Heart left ventricle (tissue), 16 donors: ENCODE measurements at regions of chr1 and their contacts with region 1.

Region 1: GRCh38 chr1:156226116-156226538 is 13.3 kb downstream of the PMF1 start:
- DNase-seq: peak in 1 of 5 donors; percentile 1
- ATAC-seq: no peak
- H3K4me3 ChIP-seq: no peak overlapping the region
- H3K27ac ChIP-seq: no peak overlapping the region
- H3K4me1 ChIP-seq: peaks cover 0 to 16% (median 0%) of the 10 kb centered on the region in 12 donors
- H3K27me3 ChIP-seq: no peaks in the 10 kb centered on the region
- CTCF ChIP-seq: no peak
- POLR2A ChIP-seq: no peak

Region 2: DNA sequence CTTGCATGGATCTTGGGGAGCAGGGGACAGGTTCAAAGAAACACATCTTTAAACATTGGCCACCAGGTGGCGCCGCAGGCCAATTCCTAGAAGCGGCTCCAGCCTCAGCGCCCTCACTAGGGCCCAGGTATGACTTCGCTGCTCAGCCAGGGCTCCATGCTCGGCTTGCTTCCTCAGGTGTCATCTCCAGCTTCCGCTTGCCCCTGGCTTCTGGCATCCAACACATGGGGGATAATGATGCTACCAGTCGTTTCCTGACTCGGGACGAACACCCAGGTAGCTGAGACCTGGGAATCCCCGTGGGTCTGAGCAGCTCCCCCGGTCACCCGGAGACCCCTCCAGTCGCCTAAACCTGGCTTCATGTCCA is 135.3 kb before region 1 on chr1:
- intact Hi-C with region 1: loop called (anchors 1 to 5 kb)
- DNase-seq: peak; percentile 78 to 92 (median 84)
- ATAC-seq: peak; percentile 65 to 84 (median 80)
- H3K4me3 ChIP-seq: no peak overlapping the region
- H3K27ac ChIP-seq: peak overlapping the region in 2 of 12 donors; percentile 32 to 75
- H3K4me1 ChIP-seq: peaks cover 0 to 29% (median 9%) of the 10 kb centered on the region in 12 donors
- H3K27me3 ChIP-seq: no peaks in the 10 kb centered on the region
- CTCF ChIP-seq: peak; percentile 74 to 94 (median 89)
- POLR2A ChIP-seq: no peak

Region 3: DNA sequence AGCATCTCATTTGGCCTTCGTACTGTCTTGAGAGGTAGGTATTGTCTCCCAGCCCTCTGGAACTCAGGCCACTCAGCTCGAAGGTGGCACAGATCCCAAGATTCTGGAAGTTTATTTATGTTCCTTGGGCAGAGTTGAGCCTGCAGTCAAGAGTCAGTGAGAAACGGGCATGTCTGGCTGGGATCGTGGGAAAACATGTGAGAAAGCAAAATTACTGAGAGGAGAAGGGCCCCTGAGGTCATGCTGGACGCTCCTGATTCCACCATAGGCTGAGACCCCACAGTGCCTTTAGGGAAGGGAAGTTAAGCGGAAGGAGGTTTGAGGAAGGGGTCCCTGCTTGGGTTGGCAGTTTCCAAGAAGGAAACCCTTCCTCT is 85.3 kb before region 1 on chr1:
- intact Hi-C with region 1: loop called (anchors 1 to 2 kb)
- DNase-seq: no peak
- ATAC-seq: peak in 2 of 4 donors; percentile 3 to 5
- H3K4me3 ChIP-seq: no peak overlapping the region
- H3K27ac ChIP-seq: peak overlapping the region in 9 of 12 donors; percentile 8 to 74 (median 47)
- H3K4me1 ChIP-seq: peaks cover 0 to 23% (median 3%) of the 10 kb centered on the region in 12 donors
- H3K27me3 ChIP-seq: no peaks in the 10 kb centered on the region
- CTCF ChIP-seq: no peak
- POLR2A ChIP-seq: no peak

Region 4: GRCh38 chr1:156146020-156146768 is 79.9 kb before region 1 on chr1:
- intact Hi-C with region 1: loop called (anchors 1 to 2 kb)
- DNase-seq: peak; percentile 77 to 88 (median 82)
- ATAC-seq: peak; percentile 45 to 68 (median 54)
- H3K4me3 ChIP-seq: peak overlapping the region in 3 of 12 donors; percentile 5 to 23 (median 11)
- H3K27ac ChIP-seq: peak overlapping the region in 1 of 12 donors; percentile 18
- H3K4me1 ChIP-seq: peaks cover 5 to 52% (median 17%) of the 10 kb centered on the region in 12 donors
- H3K27me3 ChIP-seq: peaks cover 0 to 19% (median 2%) of the 10 kb centered on the region in 9 donors
- CTCF ChIP-seq: peak; percentile 54 to 77 (median 67)
- POLR2A ChIP-seq: no peak

Region 5: DNA sequence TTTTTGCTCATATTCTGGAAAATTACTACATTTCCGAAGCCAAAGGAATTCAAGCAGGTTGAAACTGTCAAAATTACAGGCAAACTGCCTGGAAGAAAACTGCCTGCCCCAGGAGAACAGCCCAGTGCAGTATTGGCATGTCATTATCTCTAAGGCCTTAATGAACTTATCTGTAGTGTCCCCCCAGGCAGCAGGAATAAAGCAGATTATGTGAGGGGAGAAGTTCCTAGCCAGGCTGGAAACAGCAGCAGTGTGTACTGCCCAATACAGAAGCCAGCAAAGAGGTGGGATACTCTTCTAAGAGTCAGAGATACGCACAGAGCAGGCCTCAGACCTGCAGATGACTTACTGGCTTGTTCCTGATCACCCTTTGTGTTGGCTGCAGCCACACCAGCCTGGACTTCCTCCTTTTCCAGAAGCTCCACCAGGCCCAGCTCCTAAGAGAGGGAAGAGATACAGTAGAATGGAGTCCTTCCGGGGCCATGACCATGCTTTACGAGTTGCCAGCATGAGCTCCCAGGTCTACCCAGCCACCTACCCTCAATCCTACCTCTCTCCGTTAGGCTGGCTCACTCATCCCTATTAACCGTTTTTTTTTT is 334.6 kb after region 1 on chr1:
- intact Hi-C with region 1: no loop called
- DNase-seq: peak in 1 of 5 donors; percentile 34
- ATAC-seq: peak in 2 of 4 donors; percentile 42 to 55
- H3K4me3 ChIP-seq: no peak overlapping the region
- H3K27ac ChIP-seq: no peak overlapping the region
- H3K4me1 ChIP-seq: peaks cover 0 to 4% (median 0%) of the 10 kb centered on the region in 12 donors
- H3K27me3 ChIP-seq: no peaks in the 10 kb centered on the region
- CTCF ChIP-seq: no peak
- POLR2A ChIP-seq: no peak